Activated naive CD4-positive, alpha-beta T cell treated with anti-CD3 and anti-CD28 coated beads for 36 hours (primary cell): ENCODE measurements at regions of chr13 and their contacts with region 1.

Region 1: DNA sequence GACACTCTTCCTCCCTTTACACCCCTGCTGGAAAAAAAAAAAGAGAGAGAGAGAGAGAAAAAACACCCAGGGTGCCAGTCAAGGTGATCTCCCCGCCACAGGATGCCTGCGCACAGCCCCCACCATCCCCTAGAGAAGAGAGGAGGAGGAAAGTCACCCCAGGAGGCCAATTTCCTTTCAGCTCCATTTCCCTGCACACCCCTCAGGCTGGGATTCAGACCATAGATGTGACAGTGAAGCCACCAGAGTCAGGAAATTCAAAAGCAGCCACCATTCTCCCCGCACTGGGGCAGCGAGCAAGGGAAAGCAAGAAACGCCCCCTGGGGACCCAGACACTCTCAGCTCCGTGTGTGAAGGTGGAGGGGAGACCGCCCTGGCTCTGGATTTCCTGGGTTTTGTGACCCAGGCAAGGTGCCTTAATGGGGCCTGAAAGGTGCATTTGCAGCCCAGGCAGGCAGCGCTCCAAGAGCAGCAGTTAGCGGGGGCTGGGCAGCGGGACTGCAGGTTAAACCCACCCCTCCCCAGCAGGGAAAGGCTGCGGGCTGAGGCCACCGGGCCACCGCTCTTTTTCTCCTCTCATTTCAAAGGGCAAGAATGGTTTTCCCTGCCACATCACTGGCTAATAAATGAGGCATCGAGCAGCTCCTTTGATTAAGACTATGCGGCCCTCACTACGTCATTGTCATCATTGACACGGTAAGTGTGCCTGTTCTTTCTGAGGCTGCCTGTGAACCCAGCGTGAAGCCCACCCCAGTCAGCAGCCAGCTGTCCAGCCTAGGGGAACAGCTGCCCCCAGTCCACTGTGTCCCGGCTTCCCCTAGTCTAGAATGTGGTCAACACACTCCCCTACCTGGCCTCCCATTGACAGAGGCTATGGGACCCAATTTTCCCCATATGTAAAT is 83.8 kb upstream of the TM9SF2 start:
- DNase-seq: peak; percentile 71
- H3K4me3 Mint-ChIP-seq: no peak overlapping the region
- H3K27ac Mint-ChIP-seq: no peak overlapping the region
- H3K4me1 Mint-ChIP-seq: peaks cover 64% of the 10 kb centered on the region
- H3K27me3 Mint-ChIP-seq: peaks cover 2% of the 10 kb centered on the region

Region 2: GRCh38 chr13:99404005-99404755 is 13.3 kb before region 1 on chr13:
- CTCF ChIA-PET with region 1: interaction called, 6 read pairs
- intact Hi-C with region 1: loop called (anchors 1 kb)
- DNase-seq: no peak
- H3K4me3 Mint-ChIP-seq: no peak overlapping the region
- H3K27ac Mint-ChIP-seq: no peak overlapping the region
- H3K4me1 Mint-ChIP-seq: peaks cover 51% of the 10 kb centered on the region
- H3K27me3 Mint-ChIP-seq: no peaks in the 10 kb centered on the region